CD8-positive, alpha-beta T cell (primary cell): ENCODE measurements at regions of chr16 and their contacts with region 1.

Region 1: DNA sequence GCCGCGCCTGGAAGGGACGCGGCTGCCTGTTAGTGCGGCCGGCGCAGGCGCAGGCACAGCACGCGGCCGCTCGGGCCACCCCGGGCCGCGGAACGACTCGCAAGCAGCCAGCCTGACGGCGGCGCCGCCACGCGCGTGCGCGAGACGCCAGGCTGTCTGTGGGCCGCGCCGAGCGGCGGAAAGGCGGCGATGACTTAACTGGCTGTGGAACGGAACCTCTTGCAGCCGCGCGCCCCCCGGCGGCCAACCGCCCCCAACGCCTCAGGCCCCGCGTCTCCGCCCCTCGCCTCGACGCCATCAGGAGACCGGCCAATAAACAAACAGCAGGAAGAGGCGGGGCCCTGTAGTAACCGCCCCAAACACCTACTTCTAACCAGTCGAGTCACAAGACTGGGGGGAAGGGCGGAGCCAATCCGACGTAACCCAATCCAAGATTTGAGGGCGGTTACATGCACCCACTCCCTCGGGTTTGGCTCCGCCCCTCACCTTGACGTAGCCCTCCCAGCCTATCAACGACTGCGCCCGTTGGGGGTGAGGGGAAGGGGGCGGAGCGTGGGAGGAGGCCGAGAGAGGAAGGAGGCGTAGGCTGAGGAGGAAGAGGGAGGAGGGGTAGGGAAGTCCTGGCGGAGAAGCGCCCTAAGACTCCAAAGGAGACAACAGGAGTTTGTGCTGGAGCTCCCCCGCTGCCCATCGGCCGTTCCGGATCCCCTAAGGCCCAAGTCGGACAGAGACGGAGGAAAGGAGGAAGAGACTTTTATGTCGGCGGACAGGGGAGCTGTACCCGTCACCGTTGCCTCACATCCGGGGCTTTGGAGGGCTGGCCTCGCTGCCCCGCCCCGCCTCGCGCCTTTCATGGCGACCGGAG is at the start of gene FBRS:
- DNase-seq: peak; percentile 99 to 100 (median 100)
- ATAC-seq: peak; percentile 75
- H3K4me3 ChIP-seq: peak within 1 kb of the TSS; percentile 61 to 91
- H3K4me3 Mint-ChIP-seq: peak within 1 kb of the TSS; percentile 98
- H3K27ac ChIP-seq: peak within 1 kb of the TSS; percentile 97 to 99
- H3K27ac Mint-ChIP-seq: peak within 1 kb of the TSS; percentile 100
- H3K4me1 ChIP-seq: peaks cover 36% of the 10 kb centered on the region
- H3K4me1 Mint-ChIP-seq: peaks cover 39% of the 10 kb centered on the region
- H3K27me3 ChIP-seq: no peaks in the 10 kb centered on the region
- H3K27me3 Mint-ChIP-seq: no peaks in the 10 kb centered on the region
- CTCF ChIP-seq: peak; percentile 66
- total RNA-seq, gene FBRS: 222 to 224 TPM

Region 2: DNA sequence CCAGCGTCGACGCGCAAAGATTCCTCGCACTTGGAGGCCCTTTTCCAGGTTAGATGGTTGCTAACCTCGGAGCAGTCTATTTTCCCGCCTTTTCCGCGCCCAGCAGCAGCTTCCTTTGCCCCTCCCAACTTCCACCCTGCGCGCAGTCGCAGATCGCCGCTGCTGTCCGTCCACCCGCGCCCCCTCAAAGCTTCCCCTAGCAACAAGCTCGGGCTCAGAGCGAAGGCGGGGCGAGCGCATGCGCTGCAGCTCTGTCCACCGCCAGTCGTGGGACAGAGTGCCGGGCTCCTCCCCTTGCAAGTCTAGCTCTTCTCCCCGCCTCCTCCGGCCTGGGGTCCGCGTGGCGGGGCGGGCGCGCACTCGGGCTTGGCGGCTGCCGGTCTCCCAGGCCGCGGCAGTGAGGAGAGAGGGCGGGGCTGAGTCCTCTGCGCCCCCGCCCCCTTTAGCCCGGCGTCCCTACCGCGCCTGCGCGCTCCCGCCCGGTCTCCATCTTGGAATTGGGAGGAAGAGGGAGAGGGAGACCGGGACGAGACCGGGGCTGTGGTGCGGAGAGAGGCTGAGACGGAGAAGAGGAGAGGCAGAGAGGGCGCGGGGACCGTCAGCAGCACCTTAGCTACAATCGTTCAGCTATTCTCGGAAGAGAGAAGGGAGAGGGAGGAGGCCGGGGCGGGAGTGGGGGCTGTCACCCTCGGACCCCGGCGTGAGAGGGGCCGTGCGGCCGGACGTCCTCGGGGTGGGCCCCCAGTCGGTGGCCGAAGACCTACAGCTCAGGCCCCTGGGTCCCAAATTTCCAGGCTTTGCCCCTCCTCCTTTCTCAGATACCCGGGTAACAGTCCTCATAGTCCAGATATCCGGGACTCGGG is 684.5 kb before region 1 on chr16 and contains the start of gene TAOK2:
- CTCF ChIA-PET with region 1: no interaction called
- POLR2A ChIA-PET with region 1: interaction called, 4 read pairs
- intact Hi-C with region 1: loop called in 1 of 2 experiments (anchors 1 kb)
- DNase-seq: peak; percentile 80 to 97 (median 91)
- ATAC-seq: peak; percentile 87
- H3K4me3 ChIP-seq: peak within 1 kb of the TSS; percentile 81 to 98
- H3K4me3 Mint-ChIP-seq: peak within 1 kb of the TSS; percentile 91
- H3K27ac ChIP-seq: peak within 1 kb of the TSS; percentile 64 to 79
- H3K27ac Mint-ChIP-seq: peak within 1 kb of the TSS; percentile 89
- H3K4me1 ChIP-seq: peaks cover 26% of the 10 kb centered on the region
- H3K4me1 Mint-ChIP-seq: peaks cover 34% of the 10 kb centered on the region
- H3K27me3 ChIP-seq: no peaks in the 10 kb centered on the region
- H3K27me3 Mint-ChIP-seq: no peaks in the 10 kb centered on the region
- CTCF ChIP-seq: no peak
- total RNA-seq, gene TAOK2: 12.2 to 12.8 TPM

Region 3: GRCh38 chr16:30378236-30379204 is 279.6 kb before region 1 on chr16:
- CTCF ChIA-PET with region 1: no interaction called
- POLR2A ChIA-PET with region 1: no interaction called
- intact Hi-C with region 1: loop called (anchors 2 kb)
- DNase-seq: peak; percentile 99 to 100 (median 100)
- ATAC-seq: peak; percentile 78
- H3K4me3 ChIP-seq: peak overlapping the region; percentile 82 to 94
- H3K4me3 Mint-ChIP-seq: peak overlapping the region; percentile 98
- H3K27ac ChIP-seq: peak overlapping the region; percentile 99 to 100
- H3K27ac Mint-ChIP-seq: peak overlapping the region; percentile 100
- H3K4me1 ChIP-seq: peaks cover 58% of the 10 kb centered on the region
- H3K4me1 Mint-ChIP-seq: peaks cover 60% of the 10 kb centered on the region
- H3K27me3 ChIP-seq: no peaks in the 10 kb centered on the region
- H3K27me3 Mint-ChIP-seq: no peaks in the 10 kb centered on the region
- CTCF ChIP-seq: no peak

Region 4: GRCh38 chr16:30534368-30535105 is 123.6 kb before region 1 on chr16 and contains the start of gene ZNF747:
- CTCF ChIA-PET with region 1: interaction called, 3 read pairs
- POLR2A ChIA-PET with region 1: interaction called, 5 read pairs
- intact Hi-C with region 1: loop called (anchors 1 kb)
- DNase-seq: peak; percentile 77 to 95 (median 92)
- ATAC-seq: peak; percentile 80
- H3K4me3 ChIP-seq: peak within 1 kb of the TSS; percentile 82 to 96
- H3K4me3 Mint-ChIP-seq: peak within 1 kb of the TSS; percentile 89
- H3K27ac ChIP-seq: peak within 1 kb of the TSS; percentile 77 to 97
- H3K27ac Mint-ChIP-seq: peak within 1 kb of the TSS; percentile 96
- H3K4me1 ChIP-seq: peaks cover 13% of the 10 kb centered on the region
- H3K4me1 Mint-ChIP-seq: peaks cover 38% of the 10 kb centered on the region
- H3K27me3 ChIP-seq: no peaks in the 10 kb centered on the region
- H3K27me3 Mint-ChIP-seq: no peaks in the 10 kb centered on the region
- CTCF ChIP-seq: no peak
- total RNA-seq, gene ZNF747: 6.2 to 6.3 TPM

Region 5: GRCh38 chr16:30628627-30629540 is 29.2 kb before region 1 on chr16:
- CTCF ChIA-PET with region 1: interaction called, 6 read pairs
- POLR2A ChIA-PET with region 1: interaction called, 7 read pairs
- intact Hi-C with region 1: loop called (anchors 1 to 2 kb)
- DNase-seq: peak; percentile 77 to 92 (median 84)
- ATAC-seq: peak; percentile 96
- H3K4me3 ChIP-seq: peak overlapping the region in 1 of 2 experiments; percentile 10
- H3K4me3 Mint-ChIP-seq: peak overlapping the region; percentile 79
- H3K27ac ChIP-seq: peak overlapping the region in 1 of 2 experiments; percentile 19
- H3K27ac Mint-ChIP-seq: no peak overlapping the region
- H3K4me1 ChIP-seq: peaks cover 9% of the 10 kb centered on the region
- H3K4me1 Mint-ChIP-seq: peaks cover 5% of the 10 kb centered on the region
- H3K27me3 ChIP-seq: no peaks in the 10 kb centered on the region
- H3K27me3 Mint-ChIP-seq: no peaks in the 10 kb centered on the region
- CTCF ChIP-seq: peak; percentile 85

Region 6: DNA sequence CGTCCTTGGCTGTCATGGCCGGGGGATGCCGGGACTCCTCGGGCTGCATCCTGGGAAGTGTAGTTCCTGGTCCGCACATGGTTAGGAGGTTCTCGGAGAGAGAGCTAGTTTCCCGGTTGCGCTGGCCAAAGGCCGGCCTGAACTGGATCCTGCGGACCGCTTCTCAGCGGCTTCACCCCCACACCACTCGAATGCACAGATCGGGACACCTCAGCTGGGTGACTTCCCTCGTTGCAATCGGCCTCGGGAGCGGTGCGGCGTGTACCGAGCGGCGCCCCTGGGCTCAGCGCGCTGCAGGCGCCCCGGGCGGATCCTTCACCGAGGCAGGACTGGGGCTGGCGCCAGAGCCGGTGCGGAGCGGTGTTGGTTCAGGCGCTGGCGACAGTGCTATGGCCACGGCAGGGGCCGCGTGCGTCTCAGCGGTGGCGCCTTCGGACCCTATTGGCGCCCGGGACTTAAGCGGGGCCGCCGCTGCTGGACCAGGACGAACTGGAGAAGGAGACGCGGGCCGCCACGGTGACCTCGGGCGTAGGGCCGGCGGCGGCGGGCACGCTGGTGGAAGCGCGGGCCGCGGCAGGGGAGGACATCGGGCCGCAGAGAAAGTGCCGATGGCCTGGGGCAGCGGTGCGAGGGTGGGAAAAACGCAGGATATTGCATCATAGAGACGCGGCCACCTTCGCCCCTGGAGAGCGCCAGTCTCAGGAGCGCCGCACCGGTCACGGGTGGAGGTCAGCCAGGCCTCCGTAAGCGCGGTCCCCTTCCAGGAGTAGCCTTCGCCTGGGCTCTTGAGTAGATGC is 117.5 kb after region 1 on chr16:
- CTCF ChIA-PET with region 1: no interaction called
- POLR2A ChIA-PET with region 1: no interaction called
- intact Hi-C with region 1: no loop called
- DNase-seq: peak in 8 of 9 experiments; percentile 14 to 72 (median 58)
- ATAC-seq: peak; percentile 85
- H3K4me3 ChIP-seq: peak overlapping the region; percentile 53 to 80
- H3K4me3 Mint-ChIP-seq: peak overlapping the region; percentile 90
- H3K27ac ChIP-seq: no peak overlapping the region
- H3K27ac Mint-ChIP-seq: peak overlapping the region; percentile 27
- H3K4me1 ChIP-seq: peaks cover 14% of the 10 kb centered on the region
- H3K4me1 Mint-ChIP-seq: peaks cover 31% of the 10 kb centered on the region
- H3K27me3 ChIP-seq: no peaks in the 10 kb centered on the region
- H3K27me3 Mint-ChIP-seq: peaks cover 2% of the 10 kb centered on the region
- CTCF ChIP-seq: no peak

Region 7: DNA sequence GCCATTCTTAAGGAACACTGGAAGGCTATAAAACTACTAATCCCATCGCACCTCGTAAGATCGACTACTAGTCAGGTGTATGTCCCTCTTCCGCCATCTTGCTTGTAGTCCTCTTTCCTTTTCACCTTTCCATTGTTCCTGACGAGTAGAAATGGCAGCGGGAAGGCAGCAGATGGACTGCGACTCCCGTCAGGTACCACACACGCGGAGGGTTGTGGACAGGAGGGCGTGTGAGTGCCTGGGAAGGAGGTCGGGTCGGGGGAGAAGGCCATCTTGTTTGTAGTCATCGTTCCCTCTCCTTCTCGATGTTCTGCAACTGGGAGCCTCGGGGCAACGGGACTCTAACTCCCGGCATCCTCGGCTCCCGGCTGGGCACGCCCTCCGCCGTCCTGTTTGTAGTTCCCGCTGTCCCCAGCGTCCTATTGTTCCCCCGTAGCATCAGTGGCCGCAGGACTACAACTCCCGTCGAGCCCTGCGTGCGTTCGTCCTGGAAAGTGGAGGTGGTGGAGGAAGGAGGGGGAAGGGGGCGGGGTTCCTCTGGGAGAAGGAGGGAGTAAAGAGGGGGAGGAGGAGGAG is 264.9 kb after region 1 on chr16:
- CTCF ChIA-PET with region 1: no interaction called
- POLR2A ChIA-PET with region 1: no interaction called
- intact Hi-C with region 1: loop called in 1 of 2 experiments (anchors 2 kb)
- DNase-seq: peak; percentile 90 to 99 (median 94)
- ATAC-seq: peak; percentile 66
- H3K4me3 ChIP-seq: peak overlapping the region; percentile 75 to 96
- H3K4me3 Mint-ChIP-seq: peak overlapping the region; percentile 99
- H3K27ac ChIP-seq: peak overlapping the region; percentile 73 to 92
- H3K27ac Mint-ChIP-seq: peak overlapping the region; percentile 99
- H3K4me1 ChIP-seq: peaks cover 14% of the 10 kb centered on the region
- H3K4me1 Mint-ChIP-seq: peaks cover 22% of the 10 kb centered on the region
- H3K27me3 ChIP-seq: no peaks in the 10 kb centered on the region
- H3K27me3 Mint-ChIP-seq: no peaks in the 10 kb centered on the region
- CTCF ChIP-seq: no peak

Region 8: DNA sequence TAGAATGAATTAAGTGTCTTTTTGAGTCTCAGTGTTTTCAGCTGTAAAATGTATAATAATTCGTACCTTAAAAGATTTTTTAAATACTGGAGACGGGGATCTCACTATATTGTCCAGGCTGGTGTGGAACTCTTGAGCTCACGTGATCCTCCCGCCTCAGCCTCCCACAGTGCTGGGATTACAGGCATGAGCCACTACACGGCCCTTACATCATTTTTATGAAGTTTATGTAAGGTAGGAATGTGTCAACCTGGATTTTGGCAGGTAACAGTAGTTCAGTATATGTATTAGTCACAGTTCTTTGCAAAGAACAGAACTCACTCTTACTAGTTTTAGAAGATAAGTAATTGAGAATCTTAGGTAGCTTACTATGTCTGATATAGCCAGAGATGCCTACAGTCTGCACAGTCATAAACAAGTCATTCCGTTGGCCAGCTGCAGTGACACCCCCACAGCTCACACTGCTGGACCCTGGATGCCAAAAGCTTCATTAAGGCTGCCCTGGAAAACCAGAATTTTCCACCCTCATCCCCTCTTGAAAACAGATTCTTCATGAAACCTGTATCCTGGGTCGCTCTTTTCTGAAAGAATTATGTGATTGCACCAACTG is 770.6 kb after region 1 on chr16:
- CTCF ChIA-PET with region 1: no interaction called
- POLR2A ChIA-PET with region 1: no interaction called
- intact Hi-C with region 1: no loop called
- DNase-seq: no peak
- ATAC-seq: no peak
- H3K4me3 ChIP-seq: no peak overlapping the region
- H3K4me3 Mint-ChIP-seq: no peak overlapping the region
- H3K27ac ChIP-seq: no peak overlapping the region
- H3K27ac Mint-ChIP-seq: no peak overlapping the region
- H3K4me1 ChIP-seq: peaks cover 5% of the 10 kb centered on the region
- H3K4me1 Mint-ChIP-seq: no peaks in the 10 kb centered on the region
- H3K27me3 ChIP-seq: no peaks in the 10 kb centered on the region
- H3K27me3 Mint-ChIP-seq: no peaks in the 10 kb centered on the region
- CTCF ChIP-seq: no peak